ENCODE measurements at regions of chr10 and their contacts with region 1.

Region 1: GRCh38 chr10:7583626-7584025 is 83.1 kb downstream of the ITIH5 start:
- DNase-seq: no peak
- H3K4me3 ChIP-seq: no peak overlapping the region
- H3K27ac ChIP-seq: no peak overlapping the region
- H3K27me3 ChIP-seq: no peaks in the 10 kb centered on the region
- CTCF ChIP-seq: no peak

Region 2: DNA sequence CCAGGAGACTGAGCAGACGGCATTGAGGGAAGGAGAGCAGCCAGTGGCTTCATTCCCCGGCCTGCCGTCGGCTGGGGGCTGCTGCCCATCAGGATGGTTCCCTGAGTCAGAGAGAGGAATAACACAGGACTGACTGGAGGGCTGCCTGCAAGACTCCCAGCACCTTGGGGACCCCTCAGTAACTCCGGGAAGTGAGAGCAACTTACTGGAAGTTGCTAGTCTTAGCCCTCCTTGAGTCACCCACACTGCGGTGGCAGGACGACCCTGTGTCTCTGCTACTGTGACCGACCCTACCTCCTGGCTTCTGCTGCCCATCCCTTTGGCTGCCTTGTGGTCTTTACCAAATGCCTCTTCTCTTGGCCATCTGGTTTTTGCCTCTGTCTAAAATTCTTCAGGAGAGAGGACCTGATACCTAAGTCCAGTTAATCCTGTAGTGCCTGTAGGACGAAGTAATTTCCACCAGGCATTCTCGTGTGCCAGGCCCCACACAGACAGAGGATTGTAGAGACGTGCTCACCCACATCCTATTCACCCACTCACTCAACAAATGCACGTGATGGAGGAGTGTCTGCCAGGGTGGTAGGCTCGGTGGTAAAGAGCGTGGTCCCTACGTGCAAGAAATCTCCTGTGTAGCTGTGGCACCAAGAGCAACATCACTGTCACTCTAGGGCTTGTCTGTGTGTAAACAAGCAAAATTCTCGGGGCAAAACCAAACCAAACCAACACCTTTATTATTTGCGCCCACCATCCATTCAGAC is 1160.0 kb before region 1 on chr10:
- CTCF ChIA-PET with region 1: interaction called, 11 read pairs
- POLR2A ChIA-PET with region 1: no interaction called
- DNase-seq: no peak
- H3K4me3 ChIP-seq: no peak overlapping the region
- H3K27ac ChIP-seq: no peak overlapping the region
- H3K27me3 ChIP-seq: peaks cover under 1% of the 10 kb centered on the region
- CTCF ChIP-seq: no peak

Region 3: GRCh38 chr10:7403620-7404019 is 180.0 kb before region 1 on chr10:
- CTCF ChIA-PET with region 1: no interaction called
- POLR2A ChIA-PET with region 1: no interaction called
- DNase-seq: no peak
- H3K4me3 ChIP-seq: no peak overlapping the region
- H3K27ac ChIP-seq: no peak overlapping the region
- H3K27me3 ChIP-seq: peaks cover 7% of the 10 kb centered on the region
- CTCF ChIP-seq: no peak

Region 4: GRCh38 chr10:7649673-7650300 is 66.2 kb after region 1 on chr10:
- CTCF ChIA-PET with region 1: no interaction called
- POLR2A ChIA-PET with region 1: no interaction called
- DNase-seq: no peak
- H3K4me3 ChIP-seq: no peak overlapping the region
- H3K27ac ChIP-seq: no peak overlapping the region
- H3K27me3 ChIP-seq: no peaks in the 10 kb centered on the region
- CTCF ChIP-seq: no peak

Region 5: DNA sequence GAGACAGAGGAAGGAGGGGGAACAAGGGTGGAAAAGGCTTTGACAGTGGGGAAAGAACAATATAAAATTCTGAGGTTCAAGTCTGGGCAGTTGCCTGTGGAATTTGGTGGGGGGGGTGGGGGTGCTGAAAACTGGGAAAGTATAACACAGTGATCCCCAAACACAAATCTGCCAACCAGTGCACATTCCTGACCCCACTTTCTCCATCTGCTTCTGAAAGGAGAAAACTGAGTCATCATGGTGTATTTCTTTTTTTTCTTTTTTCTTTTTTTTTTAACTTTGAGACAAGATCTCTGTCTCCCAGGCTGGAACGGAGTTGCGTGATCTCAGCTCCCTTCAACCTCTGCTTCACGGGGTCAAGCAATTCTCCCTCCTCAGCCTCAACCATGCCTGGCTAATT is 87.5 kb after region 1 on chr10:
- CTCF ChIA-PET with region 1: no interaction called
- POLR2A ChIA-PET with region 1: no interaction called
- DNase-seq: no peak
- H3K4me3 ChIP-seq: no peak overlapping the region
- H3K27ac ChIP-seq: no peak overlapping the region
- H3K27me3 ChIP-seq: peaks cover 17% of the 10 kb centered on the region
- CTCF ChIP-seq: no peak

Measured in AG04450 (cell line).